ENCODE measurements at regions of chr3 and their contacts with region 1.

Region 1: DNA sequence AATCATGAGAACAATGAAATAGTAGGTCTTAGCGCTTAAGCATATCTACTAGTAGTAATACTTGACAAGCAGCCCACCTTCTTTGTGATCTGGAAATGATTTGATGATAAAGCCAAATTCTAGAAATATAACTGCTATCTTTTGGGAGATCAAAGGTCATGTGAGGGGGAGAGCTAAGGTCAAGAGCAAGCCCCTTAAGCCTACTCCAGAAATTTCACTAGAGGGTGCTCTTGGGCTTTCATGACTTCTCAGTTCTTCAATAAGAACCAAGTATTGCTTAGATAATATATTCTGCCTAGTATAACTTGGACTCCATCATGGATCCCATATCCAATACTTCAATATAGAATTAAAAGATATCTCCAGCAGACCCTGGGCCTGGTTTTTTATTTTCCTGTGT is 319.6 kb downstream of the ZBTB20 start:
- DNase-seq: no peak
- H3K4me3 Mint-ChIP-seq: no peak overlapping the region
- H3K27ac Mint-ChIP-seq: no peak overlapping the region
- H3K4me1 Mint-ChIP-seq: no peaks in the 10 kb centered on the region
- H3K27me3 Mint-ChIP-seq: no peaks in the 10 kb centered on the region

Region 2: DNA sequence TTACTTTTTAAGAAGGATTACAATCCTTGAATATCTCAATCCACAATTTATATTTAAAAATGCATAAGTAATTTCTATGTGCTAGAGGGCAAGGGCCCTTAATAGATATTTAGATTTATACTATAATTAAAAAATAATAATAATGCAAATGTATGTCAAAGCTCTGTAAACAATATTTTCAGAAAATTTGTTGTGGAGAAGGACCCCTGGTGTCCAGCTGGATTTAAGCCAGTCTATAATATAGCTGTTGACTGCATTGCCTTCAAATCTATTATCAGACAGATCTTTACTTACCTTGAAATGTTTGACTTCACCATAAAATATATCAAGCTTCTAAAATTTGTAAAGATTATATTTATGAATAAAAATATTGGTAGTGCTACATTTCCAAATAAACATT is 253.9 kb after region 1 on chr3:
- intact Hi-C with region 1: loop called (anchors 2 kb)
- DNase-seq: no peak
- H3K4me3 Mint-ChIP-seq: no peak overlapping the region
- H3K27ac Mint-ChIP-seq: no peak overlapping the region
- H3K4me1 Mint-ChIP-seq: no peaks in the 10 kb centered on the region
- H3K27me3 Mint-ChIP-seq: no peaks in the 10 kb centered on the region

Region 3: GRCh38 chr3:115169808-115170207 is 342.3 kb after region 1 on chr3:
- intact Hi-C with region 1: loop called (anchors 10 kb)
- DNase-seq: no peak
- H3K4me3 Mint-ChIP-seq: no peak overlapping the region
- H3K27ac Mint-ChIP-seq: no peak overlapping the region
- H3K4me1 Mint-ChIP-seq: peaks cover 13% of the 10 kb centered on the region
- H3K27me3 Mint-ChIP-seq: peaks cover 10% of the 10 kb centered on the region

Measured in activated T-helper 1 cell treated with anti-CD3 and anti-CD28 coated beads, Interleukin-12 subunit alpha, Interleukin-12 subunit beta, Interleukin-2, Interleukin-4 antibody, amounts not matched to agents 30 ng/mL and 10 ng/mL and 1 ng/mL, durations not matched to agents 14 hours and 24 hours and 36 hours (primary cell).